Breast epithelium (tissue), 4 donors: ENCODE measurements at regions of chr7 and their contacts with region 1.

Region 1: DNA sequence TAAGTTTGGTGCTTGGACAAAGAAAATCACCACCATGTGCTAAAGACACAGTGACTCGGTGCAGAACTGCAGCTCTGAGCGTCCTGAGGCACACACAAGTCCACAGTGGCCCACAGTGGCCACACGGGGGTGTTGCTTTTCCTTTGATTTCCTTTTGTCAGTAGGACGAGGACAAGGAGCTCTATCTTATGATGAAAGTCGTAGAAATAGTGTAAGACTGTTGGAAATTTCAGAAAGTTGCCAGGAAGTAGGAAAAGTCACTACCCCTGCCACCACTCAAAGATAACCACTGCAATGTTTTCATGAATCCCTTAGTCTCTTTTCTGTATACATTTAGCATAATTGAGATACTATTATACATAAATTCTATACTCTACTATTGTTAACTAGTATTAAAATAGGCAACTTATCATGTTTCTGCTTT is 146.0 kb downstream of the TNS3 start:
- DNase-seq: peak; percentile 63 to 74
- H3K4me3 ChIP-seq: no peak overlapping the region
- H3K27ac ChIP-seq: no peak overlapping the region
- H3K4me1 ChIP-seq: no peaks in the 10 kb centered on the region
- H3K27me3 ChIP-seq: no peaks in the 10 kb centered on the region
- CTCF ChIP-seq: peak; percentile 59 to 81 (median 73)
- POLR2A ChIP-seq: no peak

Region 2: DNA sequence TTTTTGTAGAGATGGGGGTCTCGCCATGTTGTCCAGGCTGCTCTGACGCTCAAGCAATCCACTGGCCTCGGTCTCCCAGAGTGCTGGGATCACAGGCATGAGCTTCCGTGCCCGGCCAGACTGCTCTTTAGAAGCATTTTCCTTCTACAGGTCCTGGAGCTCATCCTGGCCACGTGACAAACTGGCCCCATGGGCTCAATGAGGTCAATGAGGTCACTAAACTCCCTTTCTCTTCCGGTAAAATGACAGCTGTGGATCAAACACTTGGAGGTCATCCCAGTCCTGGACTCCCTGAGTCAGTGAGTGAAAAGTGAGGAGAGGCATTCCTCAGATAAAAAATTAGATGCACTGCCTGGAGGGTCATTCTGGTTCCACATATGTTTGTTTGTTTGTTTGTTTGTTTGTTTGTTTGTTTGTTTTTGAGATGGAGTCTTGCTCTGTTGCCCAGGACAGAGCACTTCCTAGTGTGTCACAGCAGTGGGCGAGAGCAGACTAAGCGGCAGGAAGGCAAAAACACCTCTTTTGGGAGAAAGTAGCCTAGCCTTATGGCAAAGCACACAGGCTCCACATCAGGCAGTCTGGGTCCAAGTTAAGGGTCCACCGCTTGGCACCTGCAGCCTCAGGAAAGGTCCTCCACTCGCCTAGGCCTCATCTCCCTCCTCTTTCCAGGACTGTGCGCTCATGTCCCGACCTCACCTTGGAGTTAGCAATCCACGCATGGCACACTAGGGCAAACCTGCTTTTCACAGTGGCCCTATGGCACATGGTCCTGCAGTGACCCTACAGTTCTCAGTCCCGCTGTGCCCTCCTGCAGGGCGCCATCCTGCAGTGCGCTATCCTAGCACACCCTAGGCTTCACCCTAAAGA is 11.2 kb after region 1 on chr7:
- intact Hi-C with region 1: loop called (anchors 1 kb)
- DNase-seq: no peak
- H3K4me3 ChIP-seq: no peak overlapping the region
- H3K27ac ChIP-seq: no peak overlapping the region
- H3K4me1 ChIP-seq: peaks cover 0 to under 1% of the 10 kb centered on the region in 2 donors
- H3K27me3 ChIP-seq: no peaks in the 10 kb centered on the region
- CTCF ChIP-seq: no peak
- POLR2A ChIP-seq: no peak

Region 3: DNA sequence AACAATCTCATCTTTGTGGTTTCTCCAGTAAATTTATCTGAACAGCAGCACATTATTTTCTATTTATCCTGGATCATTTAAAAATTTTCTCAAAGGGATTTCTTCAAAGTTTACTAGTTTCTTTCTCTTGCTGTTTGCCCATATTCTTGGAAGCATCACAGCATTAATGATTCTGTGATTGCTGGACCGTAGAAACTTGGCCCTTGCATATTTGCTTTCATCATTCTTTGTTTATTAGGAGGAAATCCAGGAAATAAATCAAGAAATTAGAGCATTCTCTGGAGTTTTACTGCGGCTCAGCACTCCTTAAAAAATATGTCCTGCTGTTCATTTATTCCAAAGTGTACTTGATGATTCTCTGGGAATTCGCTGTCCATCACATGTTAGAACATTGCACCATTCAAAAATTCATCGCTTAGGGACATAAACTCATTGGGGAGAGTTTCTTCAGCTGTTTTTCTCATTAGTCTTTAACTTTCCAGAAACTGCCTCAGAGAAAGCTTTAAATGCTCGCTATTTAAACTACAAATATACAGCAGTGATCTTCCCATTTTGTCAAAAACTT is 1224.5 kb after region 1 on chr7:
- intact Hi-C with region 1: no loop called
- DNase-seq: no peak
- H3K4me3 ChIP-seq: no peak overlapping the region
- H3K27ac ChIP-seq: no peak overlapping the region
- H3K4me1 ChIP-seq: no peaks in the 10 kb centered on the region
- H3K27me3 ChIP-seq: no peaks in the 10 kb centered on the region
- CTCF ChIP-seq: no peak
- POLR2A ChIP-seq: no peak